ENCODE measurements at regions of chr13 and their contacts with region 1.

Region 1: DNA sequence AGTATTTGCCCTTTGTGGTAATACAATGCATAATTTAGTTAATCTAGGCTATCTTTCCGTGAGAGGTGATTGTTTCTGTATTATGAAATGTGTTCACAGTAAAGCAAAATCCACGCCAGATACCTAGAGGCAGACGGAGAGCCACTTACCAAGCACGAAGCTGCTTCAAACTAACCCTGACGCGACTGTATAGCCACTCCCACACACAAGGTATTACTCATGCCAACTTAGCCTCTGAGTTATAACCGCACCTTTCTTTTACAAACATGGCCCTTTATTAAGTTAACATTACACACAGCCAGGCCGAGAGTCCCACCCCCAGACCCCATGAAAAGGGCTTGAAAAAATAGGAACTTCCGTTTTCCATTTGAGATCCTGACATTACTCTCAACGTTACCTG is 185.7 kb downstream of the ABCC4 start:
- DNase-seq: peak; percentile 83
- H3K4me3 ChIP-seq: peak overlapping the region in 1 of 3 experiments; percentile 43
- H3K27ac ChIP-seq: peak overlapping the region; percentile 57
- H3K4me1 ChIP-seq: peaks cover 16% of the 10 kb centered on the region
- H3K27me3 ChIP-seq: no peaks in the 10 kb centered on the region
- CTCF ChIP-seq: no peak

Region 2: DNA sequence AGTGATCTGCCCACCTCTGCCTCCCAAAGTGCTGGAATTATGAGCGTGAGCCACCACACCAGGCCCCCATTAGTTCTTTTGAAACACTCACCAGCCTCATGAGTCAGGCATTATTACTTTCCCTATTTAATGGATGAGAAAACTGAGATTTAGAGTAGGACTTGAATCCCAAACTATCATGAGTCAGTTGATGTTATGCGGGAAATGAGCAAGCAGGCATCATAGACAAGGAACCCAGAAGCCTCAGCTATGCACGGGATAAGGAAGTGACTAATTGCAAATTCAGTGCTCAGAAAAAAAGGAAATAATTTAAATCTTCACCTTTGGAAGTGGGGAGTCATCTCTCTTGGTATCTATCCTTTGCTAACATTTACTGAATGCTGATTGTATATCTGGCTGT is 31.8 kb before region 1 on chr13:
- CTCF ChIA-PET with region 1: no interaction called
- dilution Hi-C with region 1: no loop called
- in situ Hi-C with region 1: no loop called
- intact Hi-C with region 1: loop called (anchors 5 kb)
- DNase-seq: peak; percentile 65
- H3K4me3 ChIP-seq: no peak overlapping the region
- H3K27ac ChIP-seq: no peak overlapping the region
- H3K4me1 ChIP-seq: no peaks in the 10 kb centered on the region
- H3K27me3 ChIP-seq: no peaks in the 10 kb centered on the region
- CTCF ChIP-seq: no peak

Region 3: DNA sequence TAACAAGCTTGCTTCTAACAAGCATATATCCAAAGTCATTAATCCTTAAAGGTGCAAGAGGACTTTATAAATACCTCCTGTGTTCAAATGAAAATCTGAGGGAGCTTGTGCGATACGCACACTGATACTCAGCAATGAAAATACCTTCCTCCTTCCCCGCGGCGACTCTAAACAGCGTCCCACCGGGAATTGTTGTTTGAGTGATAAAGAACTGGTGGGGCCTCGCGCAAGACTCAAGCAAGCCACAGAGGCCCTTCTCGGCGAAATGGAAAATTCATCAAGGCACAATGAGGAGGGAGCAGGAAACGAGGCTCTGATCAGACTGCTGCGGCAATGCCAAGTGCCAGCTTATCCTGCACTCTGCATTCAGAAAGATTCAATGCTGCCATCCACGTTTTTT is 59.0 kb after region 1 on chr13:
- CTCF ChIA-PET with region 1: no interaction called
- dilution Hi-C with region 1: no loop called
- in situ Hi-C with region 1: no loop called
- intact Hi-C with region 1: no loop called
- DNase-seq: no peak
- H3K4me3 ChIP-seq: no peak overlapping the region
- H3K27ac ChIP-seq: no peak overlapping the region
- H3K4me1 ChIP-seq: no peaks in the 10 kb centered on the region
- H3K27me3 ChIP-seq: no peaks in the 10 kb centered on the region
- CTCF ChIP-seq: no peak

Region 4: DNA sequence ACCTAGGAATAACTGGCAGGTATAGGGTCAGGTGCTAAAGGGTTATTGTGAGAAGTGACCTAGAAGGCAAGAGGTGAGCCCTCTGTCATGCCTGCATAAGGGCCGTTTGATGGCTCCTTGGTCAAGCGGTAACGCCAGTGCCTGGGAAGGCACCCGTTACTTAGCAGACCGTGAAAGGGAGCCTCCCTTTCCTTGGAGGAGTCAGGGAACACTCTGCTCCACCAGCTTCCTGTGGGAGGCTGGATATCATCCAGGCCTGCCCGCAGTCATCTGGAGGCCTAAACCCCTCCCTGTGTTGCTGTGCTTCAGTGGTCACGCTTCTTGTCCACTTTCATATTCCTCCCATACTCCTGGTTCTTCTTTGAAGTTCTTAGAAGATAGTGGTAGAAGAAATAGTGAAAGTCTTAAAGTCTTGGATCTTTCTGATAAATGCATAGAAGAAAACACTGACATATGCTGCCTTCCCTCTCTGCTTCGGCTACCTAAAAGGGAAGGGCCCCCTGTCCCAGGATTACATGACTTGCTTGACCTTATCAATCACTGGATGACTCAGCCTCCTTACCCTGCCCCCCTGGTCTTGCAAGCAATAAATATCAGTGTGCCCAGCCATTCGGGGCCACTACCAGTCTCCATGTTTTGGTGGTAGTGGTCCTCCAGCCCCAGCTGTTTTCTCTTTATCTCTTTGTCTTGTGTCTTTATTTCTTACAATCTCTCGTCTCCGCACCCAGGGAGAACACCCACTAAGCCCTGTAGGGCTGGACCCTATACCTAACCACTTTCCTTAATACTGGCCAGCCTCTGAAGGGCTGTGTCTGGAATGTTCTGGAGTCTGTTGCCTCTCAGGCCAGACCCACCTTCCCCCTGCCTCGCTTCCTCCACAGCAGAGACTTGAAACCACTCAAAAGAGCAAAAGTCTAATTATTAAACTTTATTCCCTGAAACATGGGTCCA is 201.8 kb after region 1 on chr13:
- CTCF ChIA-PET with region 1: no interaction called
- dilution Hi-C with region 1: no loop called
- in situ Hi-C with region 1: no loop called
- intact Hi-C with region 1: no loop called
- DNase-seq: no peak
- H3K4me3 ChIP-seq: no peak overlapping the region
- H3K27ac ChIP-seq: no peak overlapping the region
- H3K4me1 ChIP-seq: peaks cover 2% of the 10 kb centered on the region
- H3K27me3 ChIP-seq: no peaks in the 10 kb centered on the region
- CTCF ChIP-seq: no peak

Measured in mammary epithelial cell (primary cell).